ENCODE measurements at regions of chr17 and their contacts with region 1.

Region 1: GRCh38 chr17:67376737-67377487 is at the start of gene PITPNC1:
- DNase-seq: peak; percentile 86 to 91 (median 87)
- H3K4me3 ChIP-seq: peak within 1 kb of the TSS; percentile 81 to 83
- H3K4me3 Mint-ChIP-seq: peak within 1 kb of the TSS; percentile 89 to 98 (median 92)
- H3K27ac ChIP-seq: peak within 1 kb of the TSS; percentile 78
- H3K27ac Mint-ChIP-seq: peak within 1 kb of the TSS; percentile 86 to 94 (median 92)
- H3K4me1 ChIP-seq: peaks cover 50% of the 10 kb centered on the region
- H3K4me1 Mint-ChIP-seq: peaks cover 29 to 51% (median 36%) of the 10 kb centered on the region in 4 donors
- H3K27me3 ChIP-seq: no peaks in the 10 kb centered on the region
- H3K27me3 Mint-ChIP-seq: no peaks in the 10 kb centered on the region
- total RNA-seq, gene PITPNC1: 68.4 to 71.2 TPM

Region 2: GRCh38 chr17:67366193-67367157 is 10.4 kb before region 1 on chr17 and contains the start of gene PSMD12:
- CTCF ChIA-PET with region 1: interaction called, 126 read pairs
- POLR2A ChIA-PET with region 1: interaction called, 49 read pairs
- intact Hi-C with region 1: no loop called
- DNase-seq: peak; percentile 90 to 95 (median 92)
- H3K4me3 ChIP-seq: peak within 1 kb of the TSS; percentile 88 to 98
- H3K4me3 Mint-ChIP-seq: peak within 1 kb of the TSS; percentile 90 to 99 (median 98)
- H3K27ac ChIP-seq: peak within 1 kb of the TSS; percentile 94
- H3K27ac Mint-ChIP-seq: peak within 1 kb of the TSS; percentile 90 to 99 (median 98)
- H3K4me1 ChIP-seq: peaks cover 45% of the 10 kb centered on the region
- H3K4me1 Mint-ChIP-seq: peaks cover 27 to 51% (median 42%) of the 10 kb centered on the region in 4 donors
- H3K27me3 ChIP-seq: no peaks in the 10 kb centered on the region
- H3K27me3 Mint-ChIP-seq: no peaks in the 10 kb centered on the region
- total RNA-seq, gene PSMD12: 46.9 to 48.8 TPM

Region 3: DNA sequence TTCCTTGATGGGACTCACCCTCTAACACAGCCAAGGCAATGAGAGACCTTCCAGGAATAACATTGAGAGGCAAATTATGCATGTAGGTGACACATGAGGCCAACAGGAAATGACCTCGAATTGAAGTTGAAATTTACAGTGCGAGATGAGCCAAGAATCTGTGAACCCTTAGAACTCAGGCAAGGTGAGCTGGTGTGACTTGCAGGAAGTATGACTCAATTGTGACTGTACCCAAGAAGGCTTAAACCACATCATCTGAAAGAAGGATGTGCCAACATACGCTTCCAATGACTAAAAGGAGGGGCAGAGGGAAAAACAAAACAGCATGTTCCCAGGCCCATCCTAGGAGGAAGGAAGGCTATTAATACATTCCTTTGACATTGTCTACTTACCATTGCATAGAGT is 45.0 kb after region 1 on chr17:
- CTCF ChIA-PET with region 1: interaction called, 27 read pairs
- POLR2A ChIA-PET with region 1: interaction called, 62 read pairs
- intact Hi-C with region 1: loop called (anchors 5 kb)
- DNase-seq: peak; percentile 78 to 89 (median 83)
- H3K4me3 ChIP-seq: peak overlapping the region in 1 of 2 donors; percentile 15
- H3K4me3 Mint-ChIP-seq: peak overlapping the region in 7 of 8 donors; percentile 19 to 80 (median 64)
- H3K27ac ChIP-seq: peak overlapping the region; percentile 77
- H3K27ac Mint-ChIP-seq: peak overlapping the region; percentile 85 to 98 (median 97)
- H3K4me1 ChIP-seq: peaks cover 65% of the 10 kb centered on the region
- H3K4me1 Mint-ChIP-seq: peaks cover 47 to 92% (median 72%) of the 10 kb centered on the region in 4 donors
- H3K27me3 ChIP-seq: no peaks in the 10 kb centered on the region
- H3K27me3 Mint-ChIP-seq: no peaks in the 10 kb centered on the region

Region 4: GRCh38 chr17:67452681-67453554 is 76.0 kb after region 1 on chr17:
- CTCF ChIA-PET with region 1: interaction called, 20 read pairs
- POLR2A ChIA-PET with region 1: interaction called, 73 read pairs
- intact Hi-C with region 1: no loop called
- DNase-seq: peak; percentile 63 to 82 (median 75)
- H3K4me3 ChIP-seq: peak overlapping the region in 1 of 2 donors; percentile 17
- H3K4me3 Mint-ChIP-seq: peak overlapping the region; percentile 71 to 86 (median 80)
- H3K27ac ChIP-seq: peak overlapping the region; percentile 34
- H3K27ac Mint-ChIP-seq: peak overlapping the region; percentile 89 to 96 (median 96)
- H3K4me1 ChIP-seq: peaks cover 86% of the 10 kb centered on the region
- H3K4me1 Mint-ChIP-seq: peaks cover 56 to 100% (median 79%) of the 10 kb centered on the region in 4 donors
- H3K27me3 ChIP-seq: no peaks in the 10 kb centered on the region
- H3K27me3 Mint-ChIP-seq: no peaks in the 10 kb centered on the region

Region 5: GRCh38 chr17:67475236-67475937 is 98.5 kb after region 1 on chr17:
- CTCF ChIA-PET with region 1: interaction called, 605 read pairs
- POLR2A ChIA-PET with region 1: interaction called, 258 read pairs
- intact Hi-C with region 1: loop called (anchors 1 kb)
- DNase-seq: peak; percentile 84 to 87 (median 86)
- H3K4me3 ChIP-seq: peak overlapping the region in 1 of 2 donors; percentile 36
- H3K4me3 Mint-ChIP-seq: peak overlapping the region; percentile 76 to 86 (median 82)
- H3K27ac ChIP-seq: peak overlapping the region; percentile 64
- H3K27ac Mint-ChIP-seq: peak overlapping the region; percentile 94 to 97 (median 96)
- H3K4me1 ChIP-seq: peaks cover 61% of the 10 kb centered on the region
- H3K4me1 Mint-ChIP-seq: peaks cover 53 to 76% (median 63%) of the 10 kb centered on the region in 4 donors
- H3K27me3 ChIP-seq: no peaks in the 10 kb centered on the region
- H3K27me3 Mint-ChIP-seq: no peaks in the 10 kb centered on the region

Region 6: GRCh38 chr17:67629971-67630320 is 253.0 kb after region 1 on chr17:
- CTCF ChIA-PET with region 1: interaction called, 45 read pairs
- POLR2A ChIA-PET with region 1: interaction called, 4 read pairs
- intact Hi-C with region 1: loop called (anchors 1 kb)
- DNase-seq: peak in 4 of 5 donors; percentile 7 to 22 (median 12)
- H3K4me3 ChIP-seq: no peak overlapping the region
- H3K4me3 Mint-ChIP-seq: no peak overlapping the region
- H3K27ac ChIP-seq: no peak overlapping the region
- H3K27ac Mint-ChIP-seq: peak overlapping the region in 1 of 7 donors; percentile 7
- H3K4me1 ChIP-seq: no peaks in the 10 kb centered on the region
- H3K4me1 Mint-ChIP-seq: peaks cover 0 to 11% (median 5%) of the 10 kb centered on the region in 4 donors
- H3K27me3 ChIP-seq: no peaks in the 10 kb centered on the region
- H3K27me3 Mint-ChIP-seq: no peaks in the 10 kb centered on the region

Region 7: GRCh38 chr17:67824735-67825626 is 448.1 kb after region 1 on chr17 and contains the start of gene BPTF:
- CTCF ChIA-PET with region 1: no interaction called
- POLR2A ChIA-PET with region 1: interaction called, 5 read pairs
- intact Hi-C with region 1: loop called (anchors 5 kb)
- DNase-seq: peak; percentile 89 to 90 (median 90)
- H3K4me3 ChIP-seq: peak within 1 kb of the TSS; percentile 52 to 75
- H3K4me3 Mint-ChIP-seq: peak within 1 kb of the TSS; percentile 91 to 100 (median 95)
- H3K27ac ChIP-seq: peak within 1 kb of the TSS; percentile 46
- H3K27ac Mint-ChIP-seq: peak within 1 kb of the TSS; percentile 96 to 99 (median 98)
- H3K4me1 ChIP-seq: peaks cover 38% of the 10 kb centered on the region
- H3K4me1 Mint-ChIP-seq: peaks cover 18 to 45% (median 30%) of the 10 kb centered on the region in 4 donors
- H3K27me3 ChIP-seq: no peaks in the 10 kb centered on the region
- H3K27me3 Mint-ChIP-seq: peaks cover 0 to 3% of the 10 kb centered on the region in 2 donors
- total RNA-seq, gene BPTF: 182 to 187 TPM